ENCODE measurements at regions of chr10 and their contacts with region 1.

Region 1: GRCh38 chr10:25047088-25047487 is 30.7 kb downstream of the THNSL1 start:
- DNase-seq: no peak
- H3K4me3 ChIP-seq: no peak overlapping the region
- H3K27ac ChIP-seq: no peak overlapping the region
- H3K4me1 ChIP-seq: no peaks in the 10 kb centered on the region
- H3K27me3 ChIP-seq: no peaks in the 10 kb centered on the region
- CTCF ChIP-seq: no peak

Region 2: GRCh38 chr10:25033126-25033525 is 14.0 kb before region 1 on chr10:
- CTCF ChIA-PET with region 1: no interaction called
- POLR2A ChIA-PET with region 1: interaction called, 17 read pairs
- intact Hi-C with region 1: no loop called
- DNase-seq: no peak
- H3K4me3 ChIP-seq: no peak overlapping the region
- H3K27ac ChIP-seq: no peak overlapping the region
- H3K4me1 ChIP-seq: no peaks in the 10 kb centered on the region
- H3K27me3 ChIP-seq: no peaks in the 10 kb centered on the region
- CTCF ChIP-seq: no peak

Measured in A673 (cell line).